Ovary (tissue), 10 donors: ENCODE measurements at regions of chr22 and their contacts with region 1.

Region 1: DNA sequence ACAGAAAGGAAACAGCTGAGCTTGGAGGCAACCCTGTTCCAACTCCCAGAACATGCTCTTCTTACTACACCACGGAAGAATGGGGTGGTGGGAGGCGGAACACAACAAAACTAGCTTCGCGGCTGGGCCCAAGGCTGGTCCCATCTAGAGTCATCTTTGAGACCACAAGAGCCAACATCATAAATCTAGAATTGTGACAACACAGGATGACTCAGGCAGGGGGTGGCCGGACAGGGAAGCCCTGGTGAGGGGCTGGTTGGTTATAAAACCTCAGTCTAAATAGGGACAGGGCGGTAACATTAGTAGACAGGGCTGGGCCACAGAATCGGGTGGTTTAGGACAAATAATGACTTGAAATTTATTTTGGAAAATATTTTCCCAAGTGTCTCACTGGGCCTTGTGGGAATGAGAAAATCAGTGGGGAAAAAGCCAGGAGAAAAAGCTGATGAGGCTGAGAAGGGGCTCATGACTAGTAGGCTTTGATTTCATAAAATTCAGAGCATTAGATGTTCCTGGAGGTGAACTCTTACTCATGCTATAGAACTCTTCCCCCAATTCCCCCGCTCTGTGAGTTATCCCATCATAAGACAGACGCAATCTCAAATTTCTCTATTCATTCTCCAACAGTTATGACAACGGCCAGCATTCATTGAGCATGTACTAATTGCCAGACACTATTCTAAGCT is 151.8 kb upstream of the TIMP3 start:
- DNase-seq: peak in 1 of 5 donors; percentile 22
- H3K4me3 ChIP-seq: no peak overlapping the region
- H3K27ac ChIP-seq: no peak overlapping the region
- H3K4me1 ChIP-seq: no peaks in the 10 kb centered on the region
- H3K27me3 ChIP-seq: no peaks in the 10 kb centered on the region
- CTCF ChIP-seq: no peak
- EP300 ChIP-seq: no peak
- POLR2A ChIP-seq: no peak

Region 2: DNA sequence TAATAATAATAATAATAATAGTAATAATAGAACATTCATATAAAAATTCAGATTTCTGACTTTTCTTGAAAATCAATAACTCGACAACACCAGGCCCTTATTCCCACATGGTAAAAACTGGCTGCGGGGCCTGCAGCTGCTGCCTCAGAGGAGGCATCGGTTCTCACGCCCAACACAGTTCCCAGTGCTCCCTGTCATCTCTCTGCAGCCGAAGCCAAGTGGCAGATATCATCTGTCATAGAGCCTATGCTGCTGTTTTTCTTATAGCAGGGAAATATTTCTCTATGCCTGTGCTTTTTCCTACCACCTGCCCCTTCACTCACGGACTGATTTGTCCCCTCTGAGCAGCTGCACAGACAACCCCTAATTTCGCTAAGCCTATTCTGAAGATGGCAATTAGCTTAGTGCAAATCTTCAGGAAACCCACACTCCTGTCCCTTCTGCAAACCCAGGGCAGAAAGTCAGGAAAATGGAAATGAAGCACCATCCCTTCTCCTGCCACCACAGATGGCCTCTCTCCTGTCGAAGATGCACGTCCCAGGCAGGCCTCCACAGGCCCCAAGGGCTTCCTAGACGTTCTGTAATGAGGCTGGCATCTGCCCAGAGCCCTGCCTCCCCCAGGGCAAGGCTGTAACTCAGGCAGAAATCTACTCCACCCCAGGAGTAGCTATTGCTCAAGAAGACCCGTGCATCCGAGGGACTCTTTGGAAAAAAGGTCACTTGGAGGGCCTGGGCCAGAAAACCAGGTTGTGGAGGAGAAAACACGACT is 341.9 kb after region 1 on chr22:
- intact Hi-C with region 1: loop called in 1 of 4 experiments (anchors 10 kb)
- DNase-seq: no peak
- H3K4me3 ChIP-seq: no peak overlapping the region
- H3K27ac ChIP-seq: no peak overlapping the region
- H3K4me1 ChIP-seq: peaks cover 9% of the 10 kb centered on the region
- H3K27me3 ChIP-seq: no peaks in the 10 kb centered on the region
- CTCF ChIP-seq: no peak
- EP300 ChIP-seq: no peak
- POLR2A ChIP-seq: no peak